ENCODE measurements at regions of chr5 and their contacts with region 1.

Region 1: GRCh38 chr5:150599917-150600499 is 40.5 kb upstream of the SYNPO start:
- DNase-seq: peak; percentile 93
- H3K4me3 ChIP-seq: peak overlapping the region in 1 of 3 experiments; percentile 14
- H3K27ac ChIP-seq: peak overlapping the region; percentile 34
- H3K4me1 ChIP-seq: peaks cover 34% of the 10 kb centered on the region
- H3K27me3 ChIP-seq: no peaks in the 10 kb centered on the region
- CTCF ChIP-seq: no peak
- POLR2A ChIP-seq: no peak

Region 2: GRCh38 chr5:150272526-150272925 is 327.5 kb before region 1 on chr5:
- CTCF ChIA-PET with region 1: no interaction called
- POLR2A ChIA-PET with region 1: no interaction called
- dilution Hi-C with region 1: no loop called
- intact Hi-C with region 1: no loop called
- DNase-seq: peak; percentile 18
- H3K4me3 ChIP-seq: no peak overlapping the region
- H3K27ac ChIP-seq: no peak overlapping the region
- H3K4me1 ChIP-seq: no peaks in the 10 kb centered on the region
- H3K27me3 ChIP-seq: peaks cover 9 to 19% of the 10 kb centered on the region in 2 experiments
- CTCF ChIP-seq: peak in 1 of 2 donors; percentile 42
- POLR2A ChIP-seq: no peak

Region 3: DNA sequence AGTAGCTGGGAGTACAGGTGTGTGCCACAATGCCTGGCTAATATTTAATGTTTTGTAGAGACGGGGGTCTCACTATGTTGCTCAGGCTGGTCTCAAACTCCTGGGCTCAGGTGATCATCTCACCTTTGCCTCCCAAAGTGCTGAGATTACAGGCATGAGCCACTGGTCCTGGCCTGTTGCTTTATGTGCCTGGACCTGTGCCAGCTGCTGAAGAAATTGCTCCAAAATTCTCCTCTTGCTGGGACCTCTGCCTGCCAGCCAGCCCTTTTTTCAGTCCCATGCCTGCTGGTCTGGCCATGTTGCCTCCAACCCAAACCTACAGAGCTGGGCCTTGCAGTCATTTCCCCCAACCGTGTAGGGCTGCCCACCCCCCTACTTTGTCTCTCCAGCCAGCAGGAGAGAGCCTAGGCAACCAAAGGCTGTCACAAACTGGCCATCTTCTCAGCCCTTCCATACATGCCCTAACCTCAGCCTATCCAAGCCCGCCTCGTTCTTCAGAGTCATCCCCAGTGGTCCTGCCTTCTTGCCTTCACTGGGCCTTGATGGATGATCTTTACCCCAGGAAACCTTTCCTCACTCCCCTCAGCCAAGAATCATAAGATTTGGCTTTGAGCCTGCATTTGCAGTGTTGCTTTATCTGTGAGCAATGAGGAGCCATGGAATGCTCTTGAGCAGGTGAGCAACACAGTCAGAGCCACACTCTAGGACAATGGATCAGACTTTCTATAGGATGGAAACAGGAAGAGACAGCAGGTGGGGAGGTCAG is 13.1 kb after region 1 on chr5:
- CTCF ChIA-PET with region 1: interaction called, 3 read pairs
- POLR2A ChIA-PET with region 1: interaction called, 3 read pairs
- dilution Hi-C with region 1: no loop called
- intact Hi-C with region 1: loop called (anchors 1 kb)
- DNase-seq: no peak
- H3K4me3 ChIP-seq: no peak overlapping the region
- H3K27ac ChIP-seq: no peak overlapping the region
- H3K4me1 ChIP-seq: peaks cover 29% of the 10 kb centered on the region
- H3K27me3 ChIP-seq: no peaks in the 10 kb centered on the region
- CTCF ChIP-seq: no peak
- POLR2A ChIP-seq: no peak

Region 4: DNA sequence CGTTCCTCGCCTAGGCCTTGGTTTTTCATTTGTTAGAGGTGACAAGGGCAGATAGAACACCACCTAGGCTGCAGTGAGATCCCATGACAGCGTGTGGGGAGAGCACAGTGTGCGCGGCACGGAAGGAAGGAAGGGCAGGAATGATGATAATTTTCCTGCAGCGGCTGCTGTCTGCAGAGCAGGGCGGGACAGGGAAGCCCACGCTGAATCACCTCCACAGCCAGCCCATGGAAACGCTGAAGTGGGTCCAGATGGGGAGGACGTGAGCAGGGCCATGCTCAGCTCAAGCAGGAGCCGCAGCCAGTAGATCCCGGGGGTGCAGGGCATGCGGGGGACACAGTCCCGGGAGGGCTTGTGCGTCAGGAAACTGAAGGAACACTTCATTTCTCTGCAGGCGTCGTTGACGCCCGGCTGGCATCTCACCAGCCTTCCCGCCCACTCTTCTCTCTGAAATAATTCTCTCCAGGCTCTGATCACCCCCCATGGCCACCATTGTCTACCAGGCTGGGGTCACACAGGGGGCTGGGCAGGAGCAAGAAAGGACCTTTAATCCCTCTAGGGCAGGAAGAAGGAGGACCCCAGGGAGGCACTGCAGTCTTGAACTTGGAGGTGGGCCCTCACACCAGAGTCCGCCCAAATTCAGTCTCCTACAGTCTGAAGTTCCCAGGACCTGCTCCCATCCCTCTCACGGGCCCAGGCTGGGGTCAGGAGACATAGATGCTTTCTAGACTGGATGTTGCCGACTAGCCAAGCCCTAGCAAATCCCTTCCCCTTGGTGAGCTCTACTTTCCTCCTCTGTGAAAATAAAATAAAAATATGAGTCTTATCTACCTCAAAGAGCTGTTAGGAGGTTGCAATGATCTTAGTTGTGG is 19.6 kb after region 1 on chr5:
- CTCF ChIA-PET with region 1: no interaction called
- POLR2A ChIA-PET with region 1: no interaction called
- dilution Hi-C with region 1: no loop called
- intact Hi-C with region 1: loop called (anchors 1 kb)
- DNase-seq: peak; percentile 71
- H3K4me3 ChIP-seq: no peak overlapping the region
- H3K27ac ChIP-seq: peak overlapping the region; percentile 6
- H3K4me1 ChIP-seq: peaks cover 28% of the 10 kb centered on the region
- H3K27me3 ChIP-seq: no peaks in the 10 kb centered on the region
- CTCF ChIP-seq: no peak
- POLR2A ChIP-seq: peak; percentile 56

Region 5: DNA sequence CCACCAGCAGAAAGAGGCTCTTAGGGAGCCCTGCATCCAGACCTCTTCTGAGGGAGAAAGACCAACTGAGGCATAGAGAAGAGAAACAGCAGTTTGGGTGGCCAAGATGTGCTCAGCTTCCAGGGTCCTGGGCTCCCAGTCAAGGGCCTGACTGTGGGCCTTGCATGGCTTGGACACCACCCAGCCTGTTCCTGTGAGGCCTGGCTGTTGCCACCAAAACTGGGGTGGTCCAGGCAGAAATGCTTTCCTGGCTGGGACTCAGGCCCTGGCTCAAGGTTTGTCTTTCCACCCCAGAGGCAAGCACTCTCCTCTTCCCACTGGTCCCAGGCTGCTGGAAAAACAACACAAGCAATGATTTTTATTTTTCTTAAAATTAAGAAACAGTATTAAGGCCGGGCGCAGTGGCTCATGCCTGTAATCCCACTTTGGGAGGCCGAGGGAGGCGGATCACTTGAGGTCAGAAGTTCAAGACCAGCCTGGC is 74.4 kb after region 1 on chr5:
- CTCF ChIA-PET with region 1: no interaction called
- POLR2A ChIA-PET with region 1: no interaction called
- dilution Hi-C with region 1: no loop called
- intact Hi-C with region 1: no loop called
- DNase-seq: no peak
- H3K4me3 ChIP-seq: no peak overlapping the region
- H3K27ac ChIP-seq: no peak overlapping the region
- H3K4me1 ChIP-seq: peaks cover 13% of the 10 kb centered on the region
- H3K27me3 ChIP-seq: peaks cover 2 to 12% of the 10 kb centered on the region in 2 experiments
- CTCF ChIP-seq: no peak
- POLR2A ChIP-seq: no peak

Measured in endothelial cell of umbilical vein (primary cell).